Activated naive CD4-positive, alpha-beta T cell treated with anti-CD3 and anti-CD28 coated beads for 36 hours (primary cell): ENCODE measurements at regions of chr1 and their contacts with region 1.

Region 1: DNA sequence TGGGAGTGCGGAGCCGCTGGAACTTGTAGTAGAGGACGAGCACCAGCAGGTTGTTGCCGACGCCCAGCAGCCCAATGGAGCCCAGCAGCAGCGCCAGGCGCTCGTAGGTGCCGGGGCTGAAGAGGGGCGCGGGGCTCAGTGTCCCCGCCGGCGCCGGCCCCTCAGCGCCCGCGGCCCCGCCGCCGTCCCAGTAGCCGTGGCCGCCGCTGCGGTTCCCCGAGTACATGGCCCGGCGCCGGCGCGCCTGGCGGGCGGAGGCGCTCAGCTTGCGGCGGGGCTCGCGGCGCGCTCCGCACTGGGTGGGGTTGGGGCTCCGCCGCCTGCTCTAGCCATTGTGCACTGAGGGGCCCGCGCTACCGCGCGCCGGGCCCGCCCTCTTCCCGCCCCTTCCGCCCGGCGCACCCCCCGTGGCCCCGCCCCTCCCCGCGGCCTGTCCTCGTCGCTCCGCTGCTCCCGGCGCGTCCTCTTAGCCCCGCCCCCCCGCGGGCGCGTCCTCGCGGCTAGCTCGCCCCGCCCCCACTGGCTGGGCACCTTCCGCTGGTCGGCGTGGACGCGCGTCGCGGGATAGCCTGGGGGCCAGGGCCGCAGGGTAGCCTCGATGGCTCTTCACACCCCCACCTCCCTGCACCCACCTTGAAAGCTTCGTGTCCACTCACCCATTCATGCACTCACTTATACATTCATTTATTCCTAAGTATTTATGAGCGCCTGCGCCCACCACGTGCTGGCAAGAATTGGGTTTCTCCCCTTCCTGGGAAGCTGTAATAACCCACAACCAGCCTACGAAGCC is at the starts of genes CHML and OPN3:
- DNase-seq: peak; percentile 93
- H3K4me3 Mint-ChIP-seq: peak within 1 kb of the TSS; percentile 74
- H3K27ac Mint-ChIP-seq: peak within 1 kb of the TSS; percentile 81
- H3K4me1 Mint-ChIP-seq: peaks cover 39% of the 10 kb centered on the region
- H3K27me3 Mint-ChIP-seq: no peaks in the 10 kb centered on the region
- total RNA-seq, gene CHML: 19.9 to 21.1 TPM
- total RNA-seq, gene OPN3: 7.7 to 9.0 TPM

Region 2: GRCh38 chr1:241396747-241397681 is 243.2 kb before region 1 on chr1:
- CTCF ChIA-PET with region 1: no interaction called
- intact Hi-C with region 1: no loop called
- DNase-seq: no peak
- H3K4me3 Mint-ChIP-seq: no peak overlapping the region
- H3K27ac Mint-ChIP-seq: no peak overlapping the region
- H3K4me1 Mint-ChIP-seq: no peaks in the 10 kb centered on the region
- H3K27me3 Mint-ChIP-seq: peaks cover 7% of the 10 kb centered on the region

Region 3: GRCh38 chr1:241519308-241520079 is 120.7 kb before region 1 on chr1 and contains the start of gene FH:
- CTCF ChIA-PET with region 1: no interaction called
- intact Hi-C with region 1: loop called (anchors 1 kb)
- DNase-seq: peak; percentile 97
- H3K4me3 Mint-ChIP-seq: peak within 1 kb of the TSS; percentile 89
- H3K27ac Mint-ChIP-seq: peak within 1 kb of the TSS; percentile 77
- H3K4me1 Mint-ChIP-seq: peaks cover 11% of the 10 kb centered on the region
- H3K27me3 Mint-ChIP-seq: peaks cover 11% of the 10 kb centered on the region
- total RNA-seq, gene FH: 91.6 to 95.4 TPM

Region 4: GRCh38 chr1:241627453-241628259 is 12.6 kb before region 1 on chr1:
- CTCF ChIA-PET with region 1: no interaction called
- intact Hi-C with region 1: loop called (anchors 1 kb)
- DNase-seq: peak; percentile 69
- H3K4me3 Mint-ChIP-seq: peak overlapping the region; percentile 49
- H3K27ac Mint-ChIP-seq: peak overlapping the region; percentile 79
- H3K4me1 Mint-ChIP-seq: peaks cover 31% of the 10 kb centered on the region
- H3K27me3 Mint-ChIP-seq: no peaks in the 10 kb centered on the region

Region 5: DNA sequence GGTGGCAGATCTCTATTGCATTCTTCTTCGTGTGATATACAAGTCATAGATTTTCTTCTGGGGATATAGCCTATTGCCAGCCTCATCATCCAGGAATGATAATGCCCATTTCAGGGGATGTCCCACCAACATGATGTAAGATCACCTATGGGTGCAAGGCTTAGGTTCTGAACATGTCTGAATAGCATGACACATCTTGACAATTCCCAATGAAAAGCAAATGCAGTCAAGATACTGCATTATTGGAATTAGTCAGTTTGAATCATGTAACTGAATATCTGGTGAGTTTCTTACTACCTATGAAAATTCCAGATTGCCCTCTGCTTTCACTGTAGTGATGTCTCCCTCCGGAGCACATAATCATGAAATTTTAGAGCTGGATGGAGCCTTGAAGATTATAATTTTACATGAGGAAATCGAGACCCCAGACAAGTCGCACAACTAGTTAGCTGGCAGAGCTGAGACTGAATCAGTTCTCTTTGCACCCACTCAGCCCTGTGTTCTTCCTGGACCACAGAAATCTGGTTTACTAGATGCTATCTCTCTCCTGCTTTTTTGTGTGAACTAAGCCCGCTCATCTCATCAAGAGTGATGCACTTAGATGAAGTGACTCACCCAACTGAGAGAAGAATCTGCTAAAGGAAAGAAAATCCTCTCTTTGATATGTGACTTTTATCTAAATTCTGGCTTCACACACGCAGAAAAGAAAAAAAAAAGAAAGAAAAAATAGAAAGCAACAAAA is 76.9 kb after region 1 on chr1:
- CTCF ChIA-PET with region 1: no interaction called
- intact Hi-C with region 1: loop called (anchors 5 kb)
- DNase-seq: peak; percentile 35
- H3K4me3 Mint-ChIP-seq: no peak overlapping the region
- H3K27ac Mint-ChIP-seq: peak overlapping the region; percentile 60
- H3K4me1 Mint-ChIP-seq: peaks cover 22% of the 10 kb centered on the region
- H3K27me3 Mint-ChIP-seq: no peaks in the 10 kb centered on the region